WTC11 (cell line): ENCODE measurements at regions of chr17 and their contacts with region 1.

Region 1: DNA sequence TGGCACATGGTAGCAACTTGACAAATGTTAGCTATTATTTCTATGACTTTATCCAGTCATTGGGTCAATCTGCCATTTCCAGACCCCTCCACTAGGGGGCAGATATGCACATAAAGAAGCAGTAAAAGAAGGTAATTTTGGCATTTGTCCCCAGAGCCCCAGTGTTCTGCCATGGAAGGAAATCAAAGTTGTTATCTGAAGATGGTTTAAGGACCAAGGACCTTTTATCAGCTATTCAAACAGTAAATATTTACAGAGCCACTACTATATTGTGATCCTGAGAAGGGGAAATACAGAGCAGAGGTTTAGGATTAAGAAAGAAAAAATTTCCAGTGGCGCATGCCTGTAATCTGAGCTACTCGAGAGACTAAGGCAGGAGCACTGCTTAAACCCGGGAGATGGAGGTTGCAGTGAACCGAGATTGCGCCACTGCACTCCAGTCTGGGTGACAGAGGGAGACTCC is 20.0 kb downstream of the TRAF4 start:
- DNase-seq: peak; percentile 81
- ATAC-seq: no peak
- H3K4me3 Mint-ChIP-seq: no peak overlapping the region
- H3K27ac Mint-ChIP-seq: peak overlapping the region; percentile 96
- H3K4me1 Mint-ChIP-seq: peaks cover 57% of the 10 kb centered on the region
- H3K27me3 Mint-ChIP-seq: no peaks in the 10 kb centered on the region
- CTCF ChIP-seq: peak; percentile 92

Region 2: GRCh38 chr17:28750178-28751047 is 13.4 kb before region 1 on chr17:
- CTCF ChIA-PET with region 1: interaction called, 109 read pairs
- POLR2A ChIA-PET with region 1: interaction called, 11 read pairs
- DNase-seq: peak; percentile 96
- ATAC-seq: peak; percentile 57
- H3K4me3 Mint-ChIP-seq: no peak overlapping the region
- H3K27ac Mint-ChIP-seq: peak overlapping the region; percentile 54
- H3K4me1 Mint-ChIP-seq: peaks cover 47% of the 10 kb centered on the region
- H3K27me3 Mint-ChIP-seq: no peaks in the 10 kb centered on the region
- CTCF ChIP-seq: peak; percentile 88

Region 3: GRCh38 chr17:28792877-28793661 is 29.2 kb after region 1 on chr17:
- CTCF ChIA-PET with region 1: interaction called, 14 read pairs
- POLR2A ChIA-PET with region 1: no interaction called
- DNase-seq: no peak
- ATAC-seq: peak; percentile 20; the same call in 1 of the 2 replicates
- H3K4me3 Mint-ChIP-seq: no peak overlapping the region
- H3K27ac Mint-ChIP-seq: peak overlapping the region; percentile 85; the same call in 1 of the 2 replicates
- H3K4me1 Mint-ChIP-seq: 0 out of 2 replicates have a peak, but pooled peaks cover 2% of the 10 kb centered on the region
- H3K27me3 Mint-ChIP-seq: no peaks in the 10 kb centered on the region
- CTCF ChIP-seq: no peak

Region 4: DNA sequence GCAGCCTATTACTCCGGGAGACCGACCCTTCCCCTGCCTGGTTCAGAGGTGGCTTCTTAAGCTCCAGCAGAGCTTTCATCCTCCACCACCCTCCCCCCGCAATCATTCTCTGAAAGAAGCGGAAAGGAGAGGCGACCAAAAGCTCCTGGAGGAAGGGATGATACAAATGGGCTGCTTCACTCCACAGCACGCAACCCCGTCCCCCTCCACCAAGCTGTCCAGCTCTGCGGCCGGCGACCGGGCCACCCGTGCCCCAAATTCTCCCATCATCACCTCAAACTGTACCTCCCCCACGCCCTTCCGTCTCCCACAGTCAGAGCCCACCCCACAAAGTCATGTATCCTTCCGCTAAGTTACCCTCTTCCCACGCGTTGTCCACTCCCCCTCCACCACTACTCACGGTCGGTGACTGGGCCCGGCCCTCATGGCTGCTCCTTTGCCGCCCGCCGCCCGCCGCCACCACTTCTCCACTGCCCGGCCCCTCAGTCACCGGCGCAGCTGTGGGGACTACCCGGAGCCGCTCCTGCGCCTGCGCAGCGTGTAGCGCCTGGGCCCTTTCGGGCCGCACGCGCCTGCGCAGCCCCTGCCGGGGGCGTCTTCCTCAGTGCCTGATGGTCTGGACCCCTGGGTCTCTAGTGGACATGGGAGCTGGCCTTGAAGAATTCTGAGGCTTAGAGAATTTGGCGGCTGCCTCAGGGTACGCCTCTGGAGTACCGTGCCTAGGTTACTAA is 78.6 kb after region 1 on chr17 and contains the start of gene FAM222B:
- CTCF ChIA-PET with region 1: interaction called, 49 read pairs
- POLR2A ChIA-PET with region 1: no interaction called
- DNase-seq: peak; percentile 89
- ATAC-seq: peak; percentile 99
- H3K4me3 Mint-ChIP-seq: peak within 1 kb of the TSS; percentile 96
- H3K27ac Mint-ChIP-seq: peak within 1 kb of the TSS; percentile 95
- H3K4me1 Mint-ChIP-seq: peaks cover 15% of the 10 kb centered on the region
- H3K27me3 Mint-ChIP-seq: no peaks in the 10 kb centered on the region
- CTCF ChIP-seq: no peak
- total RNA-seq, gene FAM222B: 86.6 to 94.6 TPM (median 91.5 TPM) in 3 replicates

Region 5: GRCh38 chr17:28878981-28879380 is 115.1 kb after region 1 on chr17:
- CTCF ChIA-PET with region 1: interaction called, 49 read pairs
- POLR2A ChIA-PET with region 1: no interaction called
- DNase-seq: peak; percentile 80
- ATAC-seq: peak; percentile 98
- H3K4me3 Mint-ChIP-seq: no peak overlapping the region
- H3K27ac Mint-ChIP-seq: peak overlapping the region; percentile 18; the same call in 1 of the 2 replicates
- H3K4me1 Mint-ChIP-seq: peaks cover 6% of the 10 kb centered on the region; the same call in 1 of the 2 replicates
- H3K27me3 Mint-ChIP-seq: peaks cover 7% of the 10 kb centered on the region
- CTCF ChIP-seq: peak; percentile 31; the same call in 1 of the 2 replicates

Region 6: DNA sequence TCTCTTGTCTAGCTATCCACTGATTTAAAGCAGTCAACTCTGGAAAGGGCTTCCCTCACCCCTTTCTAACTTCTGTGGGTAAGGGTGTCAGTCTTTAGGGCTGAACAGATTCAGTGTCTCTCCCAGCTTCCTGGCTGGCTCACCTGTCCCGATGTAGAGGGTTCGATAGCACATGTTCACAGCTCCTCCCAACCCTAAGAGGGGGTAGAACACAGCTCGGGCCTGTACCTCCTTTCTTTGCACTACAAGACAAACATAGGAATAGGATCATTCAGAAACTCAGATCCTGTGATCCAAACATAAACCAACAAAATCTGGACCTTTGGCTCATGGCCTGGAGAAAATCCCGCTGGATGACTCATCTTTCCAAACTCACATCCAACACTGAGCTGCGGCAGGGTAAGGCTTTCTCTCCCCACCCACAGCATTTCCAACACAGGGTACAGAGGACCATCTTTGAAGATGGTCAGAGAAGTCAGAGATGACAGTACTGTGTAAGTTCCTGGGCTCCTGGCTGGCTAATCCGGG is 144.9 kb after region 1 on chr17:
- CTCF ChIA-PET with region 1: interaction called, 15 read pairs
- POLR2A ChIA-PET with region 1: no interaction called
- DNase-seq: no peak
- ATAC-seq: no peak
- H3K4me3 Mint-ChIP-seq: no peak overlapping the region
- H3K27ac Mint-ChIP-seq: peak overlapping the region; percentile 72; the same call in 1 of the 2 replicates
- H3K4me1 Mint-ChIP-seq: peaks cover 36% of the 10 kb centered on the region
- H3K27me3 Mint-ChIP-seq: no peaks in the 10 kb centered on the region
- CTCF ChIP-seq: no peak